MCF 10A (cell line): ENCODE measurements at regions of chr18 and their contacts with region 1.

Region 1: GRCh38 chr18:35580701-35581539 is 620 bp upstream of the GALNT1 start:
- DNase-seq: peak; percentile 55
- H3K4me3 Mint-ChIP-seq: peak overlapping the region; percentile 72
- H3K27ac Mint-ChIP-seq: no peak overlapping the region
- H3K4me1 Mint-ChIP-seq: peaks cover 23% of the 10 kb centered on the region
- H3K27me3 Mint-ChIP-seq: no peaks in the 10 kb centered on the region
- CTCF ChIP-seq: no peak

Region 2: GRCh38 chr18:35386600-35387351 is 194.1 kb before region 1 on chr18:
- CTCF ChIA-PET with region 1: no interaction called
- POLR2A ChIA-PET with region 1: no interaction called
- intact Hi-C with region 1: loop called (anchors 5 kb)
- DNase-seq: peak; percentile 84
- H3K4me3 Mint-ChIP-seq: no peak overlapping the region
- H3K27ac Mint-ChIP-seq: no peak overlapping the region
- H3K4me1 Mint-ChIP-seq: peaks cover 9% of the 10 kb centered on the region
- H3K27me3 Mint-ChIP-seq: no peaks in the 10 kb centered on the region
- CTCF ChIP-seq: peak; percentile 86

Region 3: DNA sequence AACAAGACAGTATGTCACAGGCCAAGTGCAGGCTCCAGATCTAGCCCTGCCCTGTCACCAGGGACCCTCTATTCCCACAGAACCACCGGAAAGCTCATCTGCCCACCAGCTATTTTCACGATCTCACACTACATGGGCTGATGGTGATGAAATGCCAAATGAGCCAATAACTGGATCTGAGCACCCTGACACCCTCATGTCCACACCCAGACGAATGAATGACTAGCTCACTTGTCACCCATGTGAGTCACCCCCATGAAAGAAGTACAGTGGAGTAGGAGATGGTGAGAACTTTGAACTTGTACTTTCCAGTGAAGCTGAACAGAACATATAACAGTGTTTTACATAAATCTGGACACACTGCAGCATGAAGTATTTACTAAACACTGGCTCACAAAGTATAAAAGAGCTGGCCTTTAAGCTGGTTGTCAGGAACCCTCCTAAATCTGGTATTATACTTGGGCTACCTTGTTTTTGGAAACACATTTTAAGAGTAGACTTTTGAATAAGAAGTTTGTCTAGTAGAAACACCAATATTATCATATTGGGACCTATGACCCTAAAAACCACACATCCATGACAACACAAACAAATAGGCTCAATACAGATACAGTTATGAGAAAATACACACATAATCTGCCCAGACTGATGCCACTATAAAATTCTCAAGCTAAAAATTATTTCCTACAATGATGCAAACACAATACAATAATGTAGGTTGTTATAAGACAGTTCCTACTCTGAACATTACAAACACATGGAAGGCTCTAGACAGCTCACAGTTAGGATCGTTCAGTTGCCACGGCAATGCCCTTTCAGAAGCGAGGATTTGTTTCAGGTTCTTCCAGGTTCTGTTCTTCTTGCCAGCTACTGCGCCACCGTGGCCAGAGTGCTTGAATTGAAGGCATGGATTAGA is 102.1 kb before region 1 on chr18:
- CTCF ChIA-PET with region 1: no interaction called
- POLR2A ChIA-PET with region 1: interaction called, 18 read pairs
- intact Hi-C with region 1: loop called (anchors 2 kb)
- DNase-seq: peak; percentile 97
- H3K4me3 Mint-ChIP-seq: peak overlapping the region; percentile 61
- H3K27ac Mint-ChIP-seq: peak overlapping the region; percentile 86
- H3K4me1 Mint-ChIP-seq: peaks cover 45% of the 10 kb centered on the region
- H3K27me3 Mint-ChIP-seq: no peaks in the 10 kb centered on the region
- CTCF ChIP-seq: no peak

Region 4: DNA sequence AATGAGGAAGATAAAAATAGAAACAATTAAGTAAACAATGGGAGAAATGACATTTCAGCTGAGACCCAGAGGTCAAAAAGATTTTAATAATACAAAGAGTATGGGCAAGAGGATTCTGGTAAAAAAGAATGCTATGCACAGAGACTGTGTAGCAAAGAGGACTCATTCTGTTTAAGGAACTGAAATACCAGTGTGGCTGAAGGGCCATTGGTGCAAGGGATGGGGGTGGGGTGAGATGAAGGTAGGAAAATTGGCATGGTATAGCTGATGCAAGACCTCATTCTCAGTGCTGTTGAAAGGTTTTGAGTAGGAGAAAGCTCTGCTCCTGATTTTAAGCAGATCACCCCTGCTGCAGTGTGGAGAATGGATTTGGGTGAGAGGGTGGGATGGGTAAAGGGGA is 11.4 kb after region 1 on chr18:
- CTCF ChIA-PET with region 1: interaction called, 3 read pairs
- POLR2A ChIA-PET with region 1: interaction called, 13 read pairs
- intact Hi-C with region 1: no loop called
- DNase-seq: no peak
- H3K4me3 Mint-ChIP-seq: no peak overlapping the region
- H3K27ac Mint-ChIP-seq: no peak overlapping the region
- H3K4me1 Mint-ChIP-seq: peaks cover 12% of the 10 kb centered on the region
- H3K27me3 Mint-ChIP-seq: no peaks in the 10 kb centered on the region
- CTCF ChIP-seq: no peak

Region 5: DNA sequence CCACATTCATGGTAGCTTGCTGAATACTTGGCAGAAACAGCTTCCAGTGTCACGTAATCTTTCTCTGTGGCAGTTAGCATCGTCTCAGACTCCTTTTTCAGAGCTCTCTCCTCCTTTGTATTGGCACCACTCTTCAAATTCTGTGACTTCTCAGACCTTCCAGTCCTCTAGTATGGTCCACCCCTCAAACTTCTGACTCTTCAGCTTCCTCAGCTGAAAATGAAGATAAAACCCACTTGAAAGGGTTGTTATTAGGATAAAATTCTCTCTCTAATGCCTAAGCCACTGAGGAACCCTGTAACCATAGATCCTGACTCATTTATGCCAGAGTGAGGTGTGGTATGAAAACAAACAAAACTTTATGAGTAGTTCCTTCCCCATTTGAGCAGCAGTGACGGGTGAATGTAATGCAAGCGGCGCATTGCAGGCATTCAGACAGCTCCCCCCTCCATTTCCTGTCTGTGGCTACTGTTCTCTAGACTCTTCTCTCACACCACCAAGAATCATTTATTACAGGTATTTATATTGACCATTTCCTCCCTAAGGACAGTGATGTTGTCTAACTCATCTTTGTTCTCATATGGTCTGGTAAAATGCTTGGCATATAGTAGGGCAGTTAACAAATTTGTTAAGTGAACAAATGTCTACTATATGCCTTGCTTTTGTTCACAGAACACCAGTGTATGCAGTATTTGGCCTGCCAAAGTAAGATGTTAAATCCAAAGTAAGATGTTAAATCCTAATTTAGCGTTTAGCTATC is 35.9 kb after region 1 on chr18:
- CTCF ChIA-PET with region 1: no interaction called
- POLR2A ChIA-PET with region 1: interaction called, 55 read pairs
- intact Hi-C with region 1: no loop called
- DNase-seq: peak; percentile 89
- H3K4me3 Mint-ChIP-seq: no peak overlapping the region
- H3K27ac Mint-ChIP-seq: no peak overlapping the region
- H3K4me1 Mint-ChIP-seq: peaks cover 24% of the 10 kb centered on the region
- H3K27me3 Mint-ChIP-seq: no peaks in the 10 kb centered on the region
- CTCF ChIP-seq: no peak

Region 6: GRCh38 chr18:35949903-35950627 is 369.1 kb after region 1 on chr18:
- CTCF ChIA-PET with region 1: no interaction called
- POLR2A ChIA-PET with region 1: no interaction called
- intact Hi-C with region 1: loop called (anchors 1 kb)
- DNase-seq: peak; percentile 66
- H3K4me3 Mint-ChIP-seq: peak overlapping the region; percentile 81
- H3K27ac Mint-ChIP-seq: peak overlapping the region; percentile 35
- H3K4me1 Mint-ChIP-seq: peaks cover 10% of the 10 kb centered on the region
- H3K27me3 Mint-ChIP-seq: peaks cover 10% of the 10 kb centered on the region
- CTCF ChIP-seq: peak; percentile 85